Naive thymus-derived CD4-positive, alpha-beta T cell (primary cell): ENCODE measurements at regions of chr14 and their contacts with region 1.

Region 1: DNA sequence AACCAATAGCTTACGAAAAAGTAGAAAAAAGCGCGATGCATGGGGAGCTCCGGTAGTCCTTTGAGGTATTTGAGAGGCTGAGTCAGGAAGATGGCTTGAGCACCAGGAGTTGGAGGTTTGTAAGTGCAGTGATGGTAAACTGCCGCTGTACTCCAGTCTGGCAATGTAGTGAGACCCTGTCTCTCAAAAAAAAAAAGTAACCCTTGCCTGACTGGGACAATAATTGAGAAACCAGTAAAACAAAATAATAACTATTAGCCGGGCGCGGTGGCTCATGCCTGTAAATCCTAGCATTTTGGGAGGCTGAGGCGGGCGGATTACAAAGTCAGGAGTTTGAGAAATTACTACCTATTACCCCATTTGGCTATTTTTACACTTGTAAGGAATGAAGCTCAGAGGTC is 632 bp upstream of the ACOT2 start:
- DNase-seq: no peak
- ATAC-seq: no peak
- H3K4me3 ChIP-seq: peak overlapping the region; percentile 73
- H3K4me3 Mint-ChIP-seq: peak overlapping the region; percentile 92 to 97 (median 94)
- H3K27ac ChIP-seq: peak overlapping the region; percentile 77
- H3K27ac Mint-ChIP-seq: peak overlapping the region; percentile 92 to 98 (median 95)
- H3K4me1 ChIP-seq: peaks cover 21% of the 10 kb centered on the region in 2 donors
- H3K4me1 Mint-ChIP-seq: peaks cover 29 to 52% (median 44%) of the 10 kb centered on the region in 7 donors
- H3K27me3 ChIP-seq: no peaks in the 10 kb centered on the region
- H3K27me3 Mint-ChIP-seq: no peaks in the 10 kb centered on the region

Region 2: DNA sequence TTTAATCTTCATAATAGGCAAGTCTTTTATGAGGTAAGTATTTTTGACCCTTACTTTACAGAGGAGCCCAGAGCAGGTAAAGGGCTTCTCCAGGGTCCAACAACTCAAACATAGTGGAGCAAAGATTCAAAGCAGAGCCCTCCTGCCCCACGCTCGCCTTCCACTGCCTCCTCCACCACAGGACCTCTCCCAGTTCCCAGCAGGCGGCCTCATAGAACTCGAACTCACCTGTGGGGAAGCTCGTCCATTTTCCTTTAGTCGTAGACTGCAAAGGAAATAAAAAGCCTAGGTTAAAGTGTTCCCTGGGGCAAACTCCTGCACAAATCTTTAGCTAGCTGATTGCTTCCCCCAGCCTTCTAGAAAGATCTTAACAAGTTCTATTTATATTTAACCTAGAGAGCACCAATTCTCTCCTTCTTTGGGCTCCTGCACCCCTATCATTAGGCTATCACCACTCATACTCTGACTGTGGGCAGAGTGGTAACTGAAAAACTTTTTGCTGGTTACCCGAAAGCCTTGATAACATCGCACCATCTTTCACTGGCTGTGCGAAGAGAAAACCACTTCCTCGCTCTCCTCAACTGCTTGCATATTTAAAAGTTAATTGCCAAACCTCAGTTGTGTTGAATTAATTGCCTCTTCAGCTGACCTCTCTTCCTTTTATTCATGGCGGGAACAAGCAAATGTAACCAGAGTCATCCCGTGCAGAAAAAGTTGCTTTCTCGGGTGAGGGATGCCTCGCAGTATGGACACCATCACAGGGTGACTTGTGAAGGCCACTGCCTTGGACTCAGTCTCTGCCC is 974.1 kb before region 1 on chr14:
- CTCF ChIA-PET with region 1: no interaction called
- POLR2A ChIA-PET with region 1: no interaction called
- intact Hi-C with region 1: no loop called
- DNase-seq: peak in 6 of 9 donors; percentile 32 to 51 (median 36)
- ATAC-seq: peak; percentile 86
- H3K4me3 ChIP-seq: no peak overlapping the region
- H3K4me3 Mint-ChIP-seq: peak overlapping the region; percentile 18 to 75 (median 68)
- H3K27ac ChIP-seq: no peak overlapping the region
- H3K27ac Mint-ChIP-seq: peak overlapping the region; percentile 7 to 83 (median 52)
- H3K4me1 ChIP-seq: peaks cover 20 to 45% of the 10 kb centered on the region in 2 donors
- H3K4me1 Mint-ChIP-seq: peaks cover 28 to 63% (median 55%) of the 10 kb centered on the region in 7 donors
- H3K27me3 ChIP-seq: peaks cover 0 to 6% of the 10 kb centered on the region in 2 donors
- H3K27me3 Mint-ChIP-seq: peaks cover 0 to 39% (median 9%) of the 10 kb centered on the region in 5 donors

Region 3: GRCh38 chr14:73503648-73504047 is 64.7 kb before region 1 on chr14:
- CTCF ChIA-PET with region 1: interaction called, 41 read pairs
- POLR2A ChIA-PET with region 1: interaction called, 13 read pairs
- intact Hi-C with region 1: loop called (anchors 1 to 2 kb)
- DNase-seq: no peak
- ATAC-seq: peak; percentile 41
- H3K4me3 ChIP-seq: no peak overlapping the region
- H3K4me3 Mint-ChIP-seq: no peak overlapping the region
- H3K27ac ChIP-seq: no peak overlapping the region
- H3K27ac Mint-ChIP-seq: no peak overlapping the region
- H3K4me1 ChIP-seq: no peaks in the 10 kb centered on the region
- H3K4me1 Mint-ChIP-seq: peaks cover 0 to 5% (median 0%) of the 10 kb centered on the region in 7 donors
- H3K27me3 ChIP-seq: no peaks in the 10 kb centered on the region
- H3K27me3 Mint-ChIP-seq: no peaks in the 10 kb centered on the region

Region 4: GRCh38 chr14:73591690-73592448 is 23.5 kb after region 1 on chr14 and contains the start of gene ACOT4:
- CTCF ChIA-PET with region 1: no interaction called
- POLR2A ChIA-PET with region 1: interaction called, 22 read pairs
- intact Hi-C with region 1: loop called in 1 of 2 experiments (anchors 1 kb)
- DNase-seq: peak; percentile 43 to 77 (median 73)
- ATAC-seq: peak; percentile 93
- H3K4me3 ChIP-seq: peak within 1 kb of the TSS; percentile 74
- H3K4me3 Mint-ChIP-seq: peak within 1 kb of the TSS; percentile 61 to 87 (median 79)
- H3K27ac ChIP-seq: peak within 1 kb of the TSS; percentile 63
- H3K27ac Mint-ChIP-seq: peak within 1 kb of the TSS in 8 of 9 donors; percentile 29 to 89 (median 70)
- H3K4me1 ChIP-seq: no peaks in the 10 kb centered on the region
- H3K4me1 Mint-ChIP-seq: peaks cover 0 to 19% (median 5%) of the 10 kb centered on the region in 7 donors
- H3K27me3 ChIP-seq: no peaks in the 10 kb centered on the region
- H3K27me3 Mint-ChIP-seq: peaks cover 0 to 10% (median 0%) of the 10 kb centered on the region in 5 donors
- total RNA-seq, gene ACOT4: 0.69 to 1.0 (median 0.89) TPM

Region 5: GRCh38 chr14:73633116-73634010 is 65.0 kb after region 1 on chr14:
- CTCF ChIA-PET with region 1: interaction called, 3 read pairs
- POLR2A ChIA-PET with region 1: interaction called, 4 read pairs
- intact Hi-C with region 1: loop called in 1 of 2 experiments (anchors 1 kb)
- DNase-seq: peak; percentile 17 to 65 (median 58)
- ATAC-seq: peak; percentile 89
- H3K4me3 ChIP-seq: peak overlapping the region; percentile 56
- H3K4me3 Mint-ChIP-seq: peak overlapping the region; percentile 59 to 86 (median 78)
- H3K27ac ChIP-seq: peak overlapping the region; percentile 42
- H3K27ac Mint-ChIP-seq: peak overlapping the region in 2 of 9 donors; percentile 46 to 69
- H3K4me1 ChIP-seq: no peaks in the 10 kb centered on the region
- H3K4me1 Mint-ChIP-seq: peaks cover 0 to 7% (median 5%) of the 10 kb centered on the region in 7 donors
- H3K27me3 ChIP-seq: no peaks in the 10 kb centered on the region
- H3K27me3 Mint-ChIP-seq: peaks cover 8 to 42% (median 11%) of the 10 kb centered on the region in 5 donors